RWPE1 (cell line): ENCODE measurements at regions of chr10 and their contacts with region 1.

Region 1: GRCh38 chr10:69392481-69393000 is 24.2 kb downstream of the TACR2 start:
- DNase-seq: peak; percentile 93
- H3K27ac ChIP-seq: peak overlapping the region; percentile 76
- CTCF ChIP-seq: peak; percentile 94

Region 2: GRCh38 chr10:69225681-69226080 is 166.9 kb before region 1 on chr10:
- CTCF ChIA-PET with region 1: interaction called, 4 read pairs
- POLR2A ChIA-PET with region 1: interaction called, 12 read pairs
- DNase-seq: no peak
- H3K27ac ChIP-seq: peak overlapping the region; percentile 74
- CTCF ChIP-seq: no peak

Region 3: DNA sequence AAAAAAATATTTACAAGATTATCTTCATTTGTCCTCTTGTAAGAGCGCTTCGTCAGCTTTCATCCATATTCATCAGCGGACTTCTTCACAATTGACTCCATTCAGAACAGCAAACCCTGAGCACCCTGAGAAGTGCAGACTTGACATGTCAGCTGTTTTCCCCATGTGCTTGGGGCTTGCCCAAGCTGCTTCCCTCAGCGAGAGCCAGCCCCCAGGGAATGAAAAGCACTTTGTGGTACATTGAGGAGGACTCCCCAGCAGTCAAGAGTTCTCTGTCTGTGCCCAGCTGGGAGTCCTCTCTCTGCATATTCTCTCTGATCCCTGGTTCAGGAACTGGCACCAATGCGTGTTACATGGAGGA is 149.7 kb before region 1 on chr10:
- CTCF ChIA-PET with region 1: interaction called, 10 read pairs
- POLR2A ChIA-PET with region 1: no interaction called
- DNase-seq: no peak
- H3K27ac ChIP-seq: peak overlapping the region; percentile 24; the same call in 1 of the 2 replicates
- CTCF ChIP-seq: no peak